IMR-90 (cell line): ENCODE measurements at regions of chrX and their contacts with region 1.

Region 1: GRCh38 chrX:129585702-129586101 is 45.6 kb downstream of the OCRL start:
- DNase-seq: peak; percentile 46
- ATAC-seq: peak; percentile 59
- H3K4me3 ChIP-seq: no peak overlapping the region
- H3K27ac ChIP-seq: peak overlapping the region; percentile 80; the same call in 1 of the 2 replicates
- H3K4me1 ChIP-seq: peaks cover 5% of the 10 kb centered on the region
- H3K27me3 ChIP-seq: peaks cover 3% of the 10 kb centered on the region; the same call in 1 of the 2 replicates
- CTCF ChIP-seq: no peak
- POLR2A ChIP-seq: no peak
- RAD21 ChIP-seq: no peak

Region 2: GRCh38 chrX:129247642-129248041 is 338.1 kb before region 1 on chrX:
- CTCF ChIA-PET with region 1: no interaction called
- POLR2A ChIA-PET with region 1: interaction called, 10 read pairs
- dilution Hi-C with region 1: no loop called
- in situ Hi-C with region 1: no loop called
- intact Hi-C with region 1: no loop called
- DNase-seq: no peak
- ATAC-seq: no peak
- H3K4me3 ChIP-seq: no peak overlapping the region
- H3K27ac ChIP-seq: no peak overlapping the region
- H3K4me1 ChIP-seq: no peaks in the 10 kb centered on the region
- H3K27me3 ChIP-seq: no peaks in the 10 kb centered on the region
- CTCF ChIP-seq: no peak
- POLR2A ChIP-seq: no peak
- RAD21 ChIP-seq: no peak